Activated naive CD4-positive, alpha-beta T cell treated with anti-CD3 and anti-CD28 coated beads for 36 hours (primary cell): ENCODE measurements at regions of chr4 and their contacts with region 1.

Region 1: DNA sequence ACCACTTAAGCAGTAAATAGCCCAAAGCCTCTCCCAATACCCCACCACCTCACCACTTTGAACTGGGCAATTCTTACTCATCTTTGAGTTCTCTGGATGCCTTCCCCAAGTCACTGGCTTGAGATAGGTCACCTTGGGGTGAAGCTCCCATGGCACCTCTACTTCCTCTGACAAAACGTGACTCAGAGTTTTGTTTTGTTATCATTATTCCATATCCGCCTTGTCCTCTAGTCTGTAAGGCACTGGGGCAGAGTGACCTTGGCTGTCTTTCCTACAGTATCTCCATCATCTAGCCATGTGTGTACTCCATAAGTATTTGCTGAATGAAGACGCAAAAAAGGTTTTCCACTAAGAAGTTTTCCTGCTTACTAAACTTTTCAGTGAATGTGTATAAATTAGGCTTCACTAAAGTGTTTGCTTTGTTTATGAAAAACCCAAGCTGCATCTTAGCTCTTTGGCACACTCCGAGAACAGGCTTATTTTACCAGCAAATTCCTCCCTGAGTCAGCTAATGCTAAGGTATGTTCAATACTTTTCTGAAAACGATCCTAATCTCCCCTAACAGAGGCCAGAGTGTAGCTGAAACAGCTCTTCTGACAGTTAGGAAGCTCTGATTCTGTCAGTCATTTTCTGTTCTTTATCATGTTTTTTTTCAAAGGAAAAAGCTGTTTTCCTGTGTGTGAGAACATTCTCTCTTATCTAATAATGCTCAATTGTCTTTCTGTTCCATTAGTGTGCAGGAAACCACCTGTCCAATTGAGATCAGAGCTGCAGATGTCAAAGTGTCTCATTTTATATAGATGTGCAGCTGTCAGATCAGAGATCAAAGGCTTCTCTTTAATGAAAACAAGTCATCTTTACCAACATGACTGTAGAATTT is 30.2 kb upstream of the TSPAN5 start:
- DNase-seq: peak; percentile 53
- H3K4me3 Mint-ChIP-seq: no peak overlapping the region
- H3K27ac Mint-ChIP-seq: peak overlapping the region; percentile 12
- H3K4me1 Mint-ChIP-seq: peaks cover 35% of the 10 kb centered on the region
- H3K27me3 Mint-ChIP-seq: no peaks in the 10 kb centered on the region

Region 2: GRCh38 chr4:98706200-98706813 is 17.7 kb after region 1 on chr4:
- CTCF ChIA-PET with region 1: interaction called, 3 read pairs
- intact Hi-C with region 1: loop called (anchors 1 kb)
- DNase-seq: peak; percentile 15
- H3K4me3 Mint-ChIP-seq: no peak overlapping the region
- H3K27ac Mint-ChIP-seq: peak overlapping the region; percentile 39
- H3K4me1 Mint-ChIP-seq: peaks cover 24% of the 10 kb centered on the region
- H3K27me3 Mint-ChIP-seq: no peaks in the 10 kb centered on the region

Region 3: GRCh38 chr4:98864560-98864959 is 175.9 kb after region 1 on chr4:
- CTCF ChIA-PET with region 1: no interaction called
- intact Hi-C with region 1: no loop called
- DNase-seq: peak; percentile 46
- H3K4me3 Mint-ChIP-seq: no peak overlapping the region
- H3K27ac Mint-ChIP-seq: no peak overlapping the region
- H3K4me1 Mint-ChIP-seq: peaks cover 8% of the 10 kb centered on the region
- H3K27me3 Mint-ChIP-seq: no peaks in the 10 kb centered on the region

Region 4: DNA sequence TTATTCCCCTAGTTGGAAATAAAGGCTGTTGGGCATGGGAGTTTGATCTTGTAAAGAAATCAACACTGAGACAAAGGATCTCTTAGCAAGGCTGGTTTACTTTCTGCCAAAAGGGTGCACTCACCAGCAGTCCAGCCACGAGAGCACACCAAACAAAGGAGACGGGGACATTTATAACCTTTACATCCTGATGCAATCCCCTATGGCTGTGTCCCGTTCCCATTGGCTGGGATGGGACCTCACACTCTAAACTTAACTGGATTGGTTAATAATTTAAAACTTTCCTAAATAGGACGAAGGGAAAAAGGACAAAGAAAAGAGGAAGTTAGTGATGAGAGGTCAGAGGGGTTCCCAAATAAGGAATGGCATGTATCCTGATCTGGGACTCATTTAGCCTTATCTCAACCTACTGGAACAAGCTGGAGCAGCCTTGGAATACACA is 324.8 kb after region 1 on chr4:
- CTCF ChIA-PET with region 1: no interaction called
- intact Hi-C with region 1: no loop called
- DNase-seq: no peak
- H3K4me3 Mint-ChIP-seq: no peak overlapping the region
- H3K27ac Mint-ChIP-seq: no peak overlapping the region
- H3K4me1 Mint-ChIP-seq: peaks cover 22% of the 10 kb centered on the region
- H3K27me3 Mint-ChIP-seq: no peaks in the 10 kb centered on the region